Dendritic cell treated with granulocyte-macrophage colony-stimulating factor and Interleukin-4, amounts not matched to agents 40 ng/mL and 50 ng/mL, for 4 days (primary cell): ENCODE measurements at regions of chr16 and their contacts with region 1.

Region 1: GRCh38 chr16:11356573-11357331 is 11.5 kb downstream of the RMI2 start:
- H3K4me3 Mint-ChIP-seq: peak overlapping the region; percentile 44
- H3K27ac Mint-ChIP-seq: peak overlapping the region; percentile 97
- H3K4me1 Mint-ChIP-seq: peaks cover 89% of the 10 kb centered on the region
- H3K27me3 Mint-ChIP-seq: peaks cover 22% of the 10 kb centered on the region

Region 2: GRCh38 chr16:10964039-10964890 is 392.5 kb before region 1 on chr16:
- intact Hi-C with region 1: loop called (anchors 10 kb)
- H3K4me3 Mint-ChIP-seq: no peak overlapping the region
- H3K27ac Mint-ChIP-seq: peak overlapping the region; percentile 73
- H3K4me1 Mint-ChIP-seq: peaks cover 53% of the 10 kb centered on the region
- H3K27me3 Mint-ChIP-seq: no peaks in the 10 kb centered on the region

Region 3: GRCh38 chr16:11025120-11025531 is 331.6 kb before region 1 on chr16:
- intact Hi-C with region 1: no loop called
- H3K4me3 Mint-ChIP-seq: no peak overlapping the region
- H3K27ac Mint-ChIP-seq: no peak overlapping the region
- H3K4me1 Mint-ChIP-seq: no peaks in the 10 kb centered on the region
- H3K27me3 Mint-ChIP-seq: no peaks in the 10 kb centered on the region

Region 4: DNA sequence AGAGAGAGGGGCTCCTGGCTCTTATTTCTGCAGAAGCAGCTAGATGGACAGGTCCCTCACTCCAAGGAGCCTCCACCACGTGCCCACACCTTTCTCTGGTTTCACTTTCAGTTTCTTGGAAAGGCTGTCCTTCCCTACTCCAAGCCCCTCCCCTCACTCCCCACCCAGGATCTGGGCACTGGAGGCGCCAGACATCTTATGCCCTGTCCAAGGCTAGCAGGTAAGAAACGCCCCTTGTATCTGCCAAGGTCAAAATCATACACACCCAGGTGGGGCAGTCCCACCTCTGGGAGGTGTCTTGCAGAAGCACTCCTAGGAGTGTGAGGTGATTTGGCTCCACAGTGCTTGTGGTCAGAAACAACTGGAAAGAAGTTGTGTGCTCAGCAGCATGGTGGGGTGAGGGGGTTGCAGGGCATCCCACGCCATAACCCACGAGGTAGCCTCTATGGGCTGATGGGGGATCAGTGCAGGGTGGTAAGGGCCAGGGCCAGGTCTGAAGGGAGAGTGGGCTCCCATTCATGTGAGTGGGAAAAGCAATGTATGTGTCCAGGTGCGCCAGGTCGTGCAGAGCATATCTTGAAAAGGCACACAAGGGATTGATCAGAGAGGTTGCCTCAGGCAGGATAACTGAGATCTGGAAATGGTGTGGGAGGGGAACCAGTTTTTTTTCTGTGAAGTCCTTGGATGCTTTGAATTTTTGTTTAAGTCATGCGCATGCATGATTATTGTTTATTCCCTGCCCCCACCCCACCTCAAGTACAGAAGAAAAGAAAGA is 43.8 kb before region 1 on chr16:
- intact Hi-C with region 1: loop called (anchors 5 kb)
- H3K4me3 Mint-ChIP-seq: no peak overlapping the region
- H3K27ac Mint-ChIP-seq: peak overlapping the region; percentile 83
- H3K4me1 Mint-ChIP-seq: peaks cover 76% of the 10 kb centered on the region
- H3K27me3 Mint-ChIP-seq: peaks cover 40% of the 10 kb centered on the region

Region 5: GRCh38 chr16:11327277-11328171 is 29.2 kb before region 1 on chr16:
- intact Hi-C with region 1: loop called (anchors 2 kb)
- H3K4me3 Mint-ChIP-seq: peak overlapping the region; percentile 50
- H3K27ac Mint-ChIP-seq: peak overlapping the region; percentile 94
- H3K4me1 Mint-ChIP-seq: peaks cover 65% of the 10 kb centered on the region
- H3K27me3 Mint-ChIP-seq: peaks cover 25% of the 10 kb centered on the region

Region 6: GRCh38 chr16:11370084-11370931 is 13.6 kb after region 1 on chr16:
- intact Hi-C with region 1: loop called (anchors 2 kb)
- H3K4me3 Mint-ChIP-seq: peak overlapping the region; percentile 44
- H3K27ac Mint-ChIP-seq: peak overlapping the region; percentile 80
- H3K4me1 Mint-ChIP-seq: peaks cover 74% of the 10 kb centered on the region
- H3K27me3 Mint-ChIP-seq: peaks cover 58% of the 10 kb centered on the region